Right ventricle myocardium inferior (tissue), 1 donor: ENCODE measurements at regions of chr15 and their contacts with region 1.

Region 1: GRCh38 chr15:51380999-51381795 is 39.7 kb downstream of the GLDN start:
- DNase-seq: no peak
- ATAC-seq: peak; percentile 92

Region 2: GRCh38 chr15:51162865-51163762 is 218.1 kb before region 1 on chr15:
- intact Hi-C with region 1: loop called (anchors 5 kb)
- DNase-seq: peak; percentile 77
- ATAC-seq: peak; percentile 91

Region 3: DNA sequence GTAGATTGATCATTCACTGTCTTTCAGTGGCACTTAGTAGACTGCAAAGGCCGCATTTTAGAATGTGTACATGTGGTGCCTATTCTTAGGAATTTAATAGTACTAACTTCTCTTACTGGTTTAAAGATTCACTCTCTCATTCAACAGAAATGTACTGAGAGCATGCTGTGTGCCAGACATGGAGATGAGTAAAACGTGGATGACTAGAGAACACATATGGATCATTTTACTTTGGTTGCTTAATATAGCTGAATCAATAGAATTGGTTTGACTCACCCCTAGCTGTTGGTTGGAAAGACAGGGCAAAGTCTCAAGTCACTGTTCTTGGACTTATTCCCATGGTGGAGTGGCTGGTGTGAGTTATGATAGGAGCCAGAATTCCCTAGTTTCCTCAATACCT is 177.4 kb before region 1 on chr15:
- intact Hi-C with region 1: no loop called
- DNase-seq: no peak
- ATAC-seq: no peak

Region 4: DNA sequence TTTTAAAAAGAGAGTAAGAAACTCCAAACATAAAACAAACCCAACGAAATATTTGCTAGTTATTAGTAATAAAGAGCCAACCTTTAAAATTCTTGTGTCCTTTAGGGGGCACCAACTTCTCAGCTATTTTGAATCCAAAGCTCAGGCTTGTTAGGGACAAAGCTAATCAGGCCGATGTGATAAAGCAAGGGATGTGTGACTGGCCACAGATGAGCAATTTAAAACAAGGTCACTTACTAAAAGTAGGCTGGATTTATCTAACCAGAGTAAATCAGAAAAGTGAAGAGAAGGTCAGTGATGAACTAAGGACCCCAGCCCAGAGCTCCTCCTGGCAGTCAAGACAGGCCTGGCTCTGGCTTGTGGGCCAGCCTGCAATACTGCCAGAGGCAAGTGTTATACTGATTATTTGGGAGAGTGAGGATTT is 151.3 kb before region 1 on chr15:
- intact Hi-C with region 1: loop called (anchors 5 kb)
- DNase-seq: no peak
- ATAC-seq: peak; percentile 65

Region 5: DNA sequence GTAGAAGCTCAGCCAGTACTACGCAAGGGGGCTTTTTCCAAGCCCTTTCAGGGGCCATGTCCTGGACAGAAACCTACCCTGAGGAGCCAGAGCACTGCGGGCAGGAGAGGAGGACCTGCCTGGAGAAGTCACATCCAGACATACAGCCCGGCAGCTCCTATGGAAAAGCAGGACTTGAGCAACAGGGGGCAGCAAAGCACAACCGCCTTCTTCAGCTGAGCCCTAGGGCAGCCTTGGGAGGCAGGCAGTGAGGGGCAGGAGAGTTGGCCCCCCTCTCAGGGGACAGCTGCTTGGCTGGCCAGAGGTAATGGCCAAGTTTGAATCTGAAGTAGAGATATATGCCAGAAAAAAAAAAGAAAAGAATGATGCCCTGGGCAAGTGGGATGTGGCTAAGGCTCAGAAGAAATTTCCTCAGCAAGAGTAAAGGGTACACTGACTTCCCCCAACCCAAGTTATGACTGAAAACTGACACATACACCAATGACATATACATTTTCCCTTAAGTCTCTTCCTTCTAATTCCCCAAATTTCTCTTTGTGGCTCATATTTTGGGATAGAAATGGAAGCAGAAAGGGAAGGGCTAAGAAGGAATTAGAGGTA is 99.7 kb before region 1 on chr15:
- intact Hi-C with region 1: loop called (anchors 1 kb)
- DNase-seq: no peak
- ATAC-seq: peak; percentile 84

Region 6: GRCh38 chr15:51286791-51287190 is 94.4 kb before region 1 on chr15:
- intact Hi-C with region 1: loop called (anchors 1 kb)
- DNase-seq: no peak
- ATAC-seq: peak; percentile 37

Region 7: GRCh38 chr15:51322621-51323296 is 58.4 kb before region 1 on chr15:
- intact Hi-C with region 1: no loop called
- DNase-seq: peak; percentile 77
- ATAC-seq: peak; percentile 74

Region 8: DNA sequence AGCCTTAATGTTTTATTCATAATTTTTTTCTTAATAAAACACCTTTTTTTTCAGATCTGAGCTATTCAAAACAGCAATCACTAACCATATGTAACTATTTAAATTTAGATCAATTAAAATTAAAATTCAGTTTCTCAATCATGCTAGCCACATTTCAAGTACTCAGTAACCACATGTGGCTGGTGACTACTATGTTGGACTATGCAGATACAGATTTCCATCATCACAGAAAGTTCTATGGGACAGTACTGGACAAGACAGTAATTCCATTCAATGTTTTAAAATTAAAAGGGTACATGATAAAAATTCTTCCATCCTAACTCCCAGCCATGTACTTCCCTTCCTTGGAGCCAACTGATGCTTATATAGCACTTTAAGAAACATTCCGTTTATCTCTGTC is 79.6 kb after region 1 on chr15:
- intact Hi-C with region 1: no loop called
- DNase-seq: no peak
- ATAC-seq: no peak

Region 9: GRCh38 chr15:51750792-51751685 is 369.8 kb after region 1 on chr15 and contains the start of gene TMOD2:
- intact Hi-C with region 1: no loop called
- DNase-seq: peak; percentile 73
- ATAC-seq: peak; percentile 89
- total RNA-seq, gene TMOD2: 9.5 TPM